SK-N-SH (cell line): ENCODE measurements at regions of chr1 and their contacts with region 1.

Region 1: DNA sequence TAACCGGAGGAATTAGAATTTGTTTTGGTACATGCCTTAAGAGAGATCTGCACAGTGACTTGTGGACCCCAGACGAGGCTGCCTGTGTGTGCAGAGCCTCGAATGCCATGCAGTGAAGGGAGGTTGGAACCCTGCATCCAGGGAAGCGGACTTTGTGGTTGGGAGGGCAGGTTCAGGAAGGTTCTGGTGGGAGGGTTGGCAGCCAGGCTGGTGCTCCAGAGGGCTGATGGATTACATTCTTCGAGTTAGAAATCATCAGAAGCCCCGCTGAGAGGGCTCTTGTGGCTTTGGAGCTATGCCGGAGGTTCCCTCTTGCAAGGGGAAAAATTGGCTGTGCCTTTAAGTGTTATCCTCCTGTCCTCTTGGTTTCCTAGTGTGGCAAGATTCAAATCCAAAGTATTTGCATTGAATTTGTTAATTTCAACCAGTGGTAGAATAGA is 21.1 kb downstream of the ROR1 start:
- DNase-seq: no peak
- H3K4me3 ChIP-seq: no peak overlapping the region
- H3K27ac ChIP-seq: no peak overlapping the region
- H3K4me1 ChIP-seq: peaks cover 0 to 19% of the 10 kb centered on the region in 2 experiments; a peak in 2 of 4 replicates
- H3K27me3 ChIP-seq: no peaks in the 10 kb centered on the region
- CTCF ChIP-seq: no peak
- EP300 ChIP-seq: no peak
- RAD21 ChIP-seq: no peak

Region 2: GRCh38 chr1:63731117-63732043 is 63.6 kb before region 1 on chr1:
- CTCF ChIA-PET with region 1: no interaction called
- POLR2A ChIA-PET with region 1: no interaction called
- DNase-seq: no peak
- H3K4me3 ChIP-seq: no peak overlapping the region
- H3K27ac ChIP-seq: peak overlapping the region in 1 of 2 experiments; percentile 21; a peak in 2 of 4 replicates
- H3K4me1 ChIP-seq: peaks cover 0 to 3% of the 10 kb centered on the region in 2 experiments; a peak in 2 of 4 replicates
- H3K27me3 ChIP-seq: no peaks in the 10 kb centered on the region
- CTCF ChIP-seq: no peak
- EP300 ChIP-seq: no peak; a peak in 1 of 4 replicates
- RAD21 ChIP-seq: no peak

Region 3: GRCh38 chr1:63915121-63915520 is 120.2 kb after region 1 on chr1:
- CTCF ChIA-PET with region 1: interaction called, 12 read pairs
- POLR2A ChIA-PET with region 1: no interaction called
- DNase-seq: peak; percentile 32
- H3K4me3 ChIP-seq: no peak overlapping the region
- H3K27ac ChIP-seq: no peak overlapping the region
- H3K4me1 ChIP-seq: peaks cover 0 to 27% of the 10 kb centered on the region in 2 experiments; a peak in 3 of 4 replicates
- H3K27me3 ChIP-seq: no peaks in the 10 kb centered on the region
- CTCF ChIP-seq: peak; percentile 46
- EP300 ChIP-seq: no peak
- RAD21 ChIP-seq: peak; percentile 67